WTC11 (cell line): ENCODE measurements at regions of chr14 and their contacts with region 1.

Region 1: GRCh38 chr14:102046343-102047278 is 40.2 kb downstream of the HSP90AA1 start:
- DNase-seq: peak; percentile 93
- ATAC-seq: peak; percentile 99
- H3K4me3 Mint-ChIP-seq: no peak overlapping the region
- H3K27ac Mint-ChIP-seq: peak overlapping the region; percentile 84
- H3K4me1 Mint-ChIP-seq: peaks cover 3% of the 10 kb centered on the region
- H3K27me3 Mint-ChIP-seq: no peaks in the 10 kb centered on the region
- CTCF ChIP-seq: no peak

Region 2: GRCh38 chr14:102063091-102063802 is 16.6 kb after region 1 on chr14:
- CTCF ChIA-PET with region 1: interaction called, 17 read pairs
- POLR2A ChIA-PET with region 1: no interaction called
- DNase-seq: peak; percentile 68
- ATAC-seq: peak; percentile 82
- H3K4me3 Mint-ChIP-seq: no peak overlapping the region; the same call in 1 of the 2 replicates
- H3K27ac Mint-ChIP-seq: no peak overlapping the region
- H3K4me1 Mint-ChIP-seq: peaks cover 11% of the 10 kb centered on the region
- H3K27me3 Mint-ChIP-seq: no peaks in the 10 kb centered on the region; the same call in 1 of the 2 replicates
- CTCF ChIP-seq: no peak

Region 3: GRCh38 chr14:102077382-102077709 is 30.7 kb after region 1 on chr14:
- CTCF ChIA-PET with region 1: interaction called, 10 read pairs
- POLR2A ChIA-PET with region 1: no interaction called
- DNase-seq: no peak
- ATAC-seq: no peak; the same call in none of the 2 replicates
- H3K4me3 Mint-ChIP-seq: no peak overlapping the region
- H3K27ac Mint-ChIP-seq: no peak overlapping the region
- H3K4me1 Mint-ChIP-seq: no peaks in the 10 kb centered on the region
- H3K27me3 Mint-ChIP-seq: no peaks in the 10 kb centered on the region
- CTCF ChIP-seq: no peak

Region 4: DNA sequence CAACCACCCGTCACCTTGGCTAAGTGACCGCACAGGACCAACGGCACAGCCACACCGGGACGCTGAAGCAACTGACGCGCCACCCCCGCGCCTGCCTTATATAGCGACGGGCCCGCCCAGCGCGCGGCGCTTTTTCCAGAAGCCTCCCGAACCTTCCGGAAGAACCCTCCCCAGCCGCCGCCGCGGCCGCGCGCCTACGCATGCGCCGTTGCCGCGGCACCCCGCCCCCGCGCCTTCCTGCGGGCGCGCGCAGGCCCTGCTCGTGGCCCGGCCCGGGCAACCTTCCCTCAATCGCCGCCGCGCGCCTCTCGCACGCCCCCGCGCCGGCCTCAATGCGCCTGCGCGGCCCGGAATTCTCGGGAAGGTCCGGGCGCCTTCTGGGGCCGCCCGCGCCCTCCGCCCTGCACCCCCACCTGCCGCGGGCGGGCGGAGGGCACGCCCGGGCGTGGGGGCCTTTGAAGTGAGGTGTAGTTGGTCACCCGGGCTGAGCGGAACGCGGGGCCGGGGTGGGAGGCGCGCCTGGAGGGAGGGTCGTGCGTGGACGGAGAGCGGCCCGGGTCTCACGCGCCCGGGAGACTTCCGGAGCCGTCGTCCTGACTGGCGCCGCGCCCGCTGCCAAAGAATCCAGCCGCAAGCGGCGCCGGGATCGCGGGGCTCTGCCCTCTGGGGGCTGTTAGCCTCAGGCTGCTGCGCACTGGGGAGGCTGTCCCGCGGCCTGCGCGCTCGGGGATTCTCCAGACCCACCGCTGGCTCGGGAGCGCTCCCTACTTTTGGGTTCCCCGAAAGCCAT is 40.6 kb after region 1 on chr14 and contains the start of gene HSP90AA1:
- CTCF ChIA-PET with region 1: interaction called, 17 read pairs
- POLR2A ChIA-PET with region 1: interaction called, 3 read pairs
- DNase-seq: peak; percentile 94
- ATAC-seq: peak; percentile 76
- H3K4me3 Mint-ChIP-seq: peak within 1 kb of the TSS; percentile 97
- H3K27ac Mint-ChIP-seq: peak within 1 kb of the TSS; percentile 96
- H3K4me1 Mint-ChIP-seq: peaks cover 53% of the 10 kb centered on the region
- H3K27me3 Mint-ChIP-seq: no peaks in the 10 kb centered on the region
- CTCF ChIP-seq: no peak
- total RNA-seq, gene HSP90AA1: 808 to 842 TPM (median 832 TPM) in 3 replicates

Region 5: DNA sequence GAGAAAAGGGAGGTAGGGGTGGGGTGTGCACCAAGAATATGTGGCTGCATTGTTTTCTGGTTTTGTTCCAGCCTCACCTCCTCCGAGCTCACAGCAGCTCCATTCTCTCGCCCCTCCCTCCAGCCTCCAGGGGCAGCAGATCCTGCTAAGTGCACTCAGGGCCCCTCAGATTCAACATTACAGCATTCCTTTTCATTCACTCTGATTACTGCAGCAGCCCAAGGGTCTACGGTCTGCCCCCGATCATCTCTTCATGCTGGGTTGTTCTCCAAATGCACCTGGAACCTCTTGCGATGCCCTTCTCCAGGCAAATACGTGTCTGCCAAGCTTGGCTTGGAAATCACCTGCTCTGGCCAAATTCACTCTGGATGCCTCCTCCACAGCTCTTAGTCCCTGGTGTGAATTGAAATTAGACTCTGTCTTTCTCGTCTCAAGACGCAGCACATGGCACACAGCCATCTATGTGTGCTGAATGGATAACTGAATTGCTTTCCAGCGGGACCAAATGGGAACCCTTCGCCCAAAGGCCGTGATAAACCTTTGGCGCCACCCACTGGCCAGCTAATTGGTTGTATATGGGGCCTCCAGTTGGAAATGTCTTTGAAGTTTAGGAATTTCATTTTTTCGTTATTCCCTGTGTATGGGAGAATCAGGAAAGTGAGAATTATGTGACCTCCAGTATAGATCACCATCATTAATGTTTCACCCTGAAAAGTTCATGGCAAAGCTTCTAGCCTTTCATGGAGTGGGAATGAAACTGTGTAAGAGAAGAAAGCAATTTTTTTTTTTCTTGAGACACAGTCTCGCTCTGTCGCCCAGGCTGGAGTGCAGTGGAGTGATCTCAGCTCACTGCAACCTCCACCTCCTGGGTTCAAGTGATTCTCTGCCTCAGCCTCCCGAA is 49.9 kb after region 1 on chr14:
- CTCF ChIA-PET with region 1: interaction called, 41 read pairs
- POLR2A ChIA-PET with region 1: interaction called, 3 read pairs
- DNase-seq: peak; percentile 87
- ATAC-seq: peak; percentile 70
- H3K4me3 Mint-ChIP-seq: 0 out of 2 replicates have a peak overlapping the region, but pooled peaks have one; percentile 2
- H3K27ac Mint-ChIP-seq: peak overlapping the region; percentile 39; the same call in 1 of the 2 replicates
- H3K4me1 Mint-ChIP-seq: peaks cover 27% of the 10 kb centered on the region
- H3K27me3 Mint-ChIP-seq: no peaks in the 10 kb centered on the region; the same call in 1 of the 2 replicates
- CTCF ChIP-seq: peak; percentile 55; the same call in 1 of the 2 replicates